AG04449 (cell line): ENCODE measurements at regions of chr9 and their contacts with region 1.

Region 1: GRCh38 chr9:133782157-133783130 is 44.3 kb upstream of the SARDH start:
- DNase-seq: peak; percentile 19
- H3K4me3 ChIP-seq: no peak overlapping the region
- CTCF ChIP-seq: peak; percentile 86

Region 2: DNA sequence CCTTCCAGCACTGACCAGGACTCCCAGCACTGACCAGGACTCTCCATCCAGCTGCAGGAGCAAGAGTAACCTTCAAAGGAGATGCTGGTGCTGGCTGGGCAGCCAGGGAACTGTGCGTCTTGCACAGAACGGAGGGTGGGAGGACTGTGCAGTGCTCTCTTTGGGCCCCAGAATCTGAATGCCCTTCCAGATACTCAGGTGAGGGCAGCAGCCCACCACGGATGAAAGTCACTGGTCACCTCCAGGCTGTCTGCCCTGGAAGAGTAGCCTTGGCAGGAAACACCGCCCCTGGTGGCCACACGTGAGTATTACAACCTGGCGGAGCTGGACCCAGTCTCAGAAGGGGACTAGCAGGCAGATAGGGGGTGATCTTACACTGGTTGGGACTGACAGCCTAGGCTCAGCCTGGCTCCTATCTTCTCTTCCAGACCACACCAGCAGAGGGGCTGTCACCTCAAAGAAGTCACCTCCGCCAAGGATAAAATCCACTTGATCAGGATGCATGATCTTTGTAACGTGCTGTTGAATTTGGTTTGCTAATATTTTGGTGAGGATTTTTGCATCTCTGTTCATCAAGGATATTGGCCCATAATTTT is 39.5 kb before region 1 on chr9:
- CTCF ChIA-PET with region 1: interaction called, 13 read pairs
- POLR2A ChIA-PET with region 1: no interaction called
- DNase-seq: no peak
- H3K4me3 ChIP-seq: no peak overlapping the region
- CTCF ChIP-seq: peak; percentile 97

Region 3: DNA sequence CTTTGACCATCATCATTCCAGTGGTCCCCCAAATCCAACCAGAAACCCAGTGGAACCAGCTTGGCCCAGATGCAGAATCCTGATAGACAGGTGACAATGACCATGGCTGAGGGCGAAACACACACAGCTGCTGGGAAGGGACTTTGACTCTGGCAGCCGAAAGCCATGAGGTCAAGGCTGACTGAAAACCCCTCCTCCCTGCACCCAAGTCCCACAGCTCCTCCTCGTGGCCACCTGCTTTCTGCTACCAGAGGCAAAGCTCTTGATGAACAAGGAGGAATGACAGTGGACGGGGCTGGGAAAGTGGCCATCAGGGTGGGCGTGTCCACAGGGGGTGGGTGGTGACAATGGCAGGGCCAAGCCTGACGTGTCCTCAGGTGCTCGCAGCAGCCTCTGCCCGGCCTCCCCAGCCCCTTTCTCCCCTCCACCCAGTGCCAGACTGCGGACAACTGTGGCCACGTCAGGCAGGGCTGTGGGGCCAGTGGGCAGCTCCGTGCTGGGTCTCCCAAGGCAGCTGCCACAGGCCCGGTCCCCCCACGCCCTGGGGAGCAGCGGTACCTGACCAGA is 13.5 kb before region 1 on chr9:
- CTCF ChIA-PET with region 1: interaction called, 63 read pairs
- POLR2A ChIA-PET with region 1: no interaction called
- DNase-seq: no peak
- H3K4me3 ChIP-seq: no peak overlapping the region
- CTCF ChIP-seq: no peak

Region 4: GRCh38 chr9:133792721-133793470 is 10.5 kb after region 1 on chr9:
- CTCF ChIA-PET with region 1: interaction called, 96 read pairs
- POLR2A ChIA-PET with region 1: no interaction called
- DNase-seq: peak; percentile 5
- H3K4me3 ChIP-seq: peak overlapping the region; percentile 8; the same call in 1 of the 2 replicates
- CTCF ChIP-seq: peak; percentile 96

Region 5: DNA sequence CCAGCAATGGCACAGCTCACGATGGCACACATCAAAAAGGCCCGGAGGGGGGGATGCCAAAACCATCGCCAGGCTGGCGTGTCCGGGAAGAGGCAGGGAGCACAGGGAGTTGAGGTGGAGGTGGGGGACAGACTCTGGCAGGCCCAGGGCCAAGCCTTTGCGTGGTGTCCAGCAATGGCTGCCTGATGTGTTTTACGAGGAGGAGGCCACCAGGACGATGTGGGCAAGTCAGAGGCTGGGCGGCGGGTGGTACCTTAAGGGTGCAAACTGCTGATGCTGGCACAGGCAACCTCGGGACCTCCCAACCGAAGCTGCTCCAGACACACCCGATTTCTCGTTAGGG is 205.0 kb after region 1 on chr9:
- CTCF ChIA-PET with region 1: interaction called, 12 read pairs
- POLR2A ChIA-PET with region 1: no interaction called
- DNase-seq: no peak
- H3K4me3 ChIP-seq: no peak overlapping the region
- CTCF ChIP-seq: no peak

Region 6: DNA sequence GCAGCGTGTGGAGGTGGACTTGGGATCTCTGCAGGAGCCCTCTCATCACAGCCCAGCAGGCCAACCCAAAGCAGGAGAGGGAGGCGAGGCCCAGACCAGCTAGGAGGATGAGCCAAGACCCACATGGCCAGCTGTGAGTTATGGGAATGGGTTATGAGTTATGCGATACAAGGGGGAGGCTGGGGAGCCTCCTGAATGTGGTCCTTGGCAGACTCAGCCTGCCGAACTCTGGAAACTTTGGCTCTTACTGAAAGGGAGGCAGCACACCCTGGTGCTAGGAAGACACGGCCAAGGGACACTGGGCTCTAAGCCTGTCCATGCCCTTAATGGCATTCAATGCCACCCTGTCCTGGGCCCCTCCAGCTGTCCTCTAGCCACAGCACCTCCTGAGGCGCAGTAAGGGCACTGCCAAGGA is 217.4 kb after region 1 on chr9:
- CTCF ChIA-PET with region 1: interaction called, 364 read pairs
- POLR2A ChIA-PET with region 1: no interaction called
- DNase-seq: no peak
- H3K4me3 ChIP-seq: no peak overlapping the region
- CTCF ChIP-seq: no peak

Region 7: GRCh38 chr9:134024828-134025605 is 242.6 kb after region 1 on chr9 and contains the start of gene BRD3OS:
- CTCF ChIA-PET with region 1: interaction called, 22 read pairs
- POLR2A ChIA-PET with region 1: no interaction called
- DNase-seq: peak; percentile 97
- H3K4me3 ChIP-seq: peak within 1 kb of the TSS; percentile 90
- CTCF ChIP-seq: no peak